ENCODE measurements at regions of chr6 and their contacts with region 1.

Region 1: DNA sequence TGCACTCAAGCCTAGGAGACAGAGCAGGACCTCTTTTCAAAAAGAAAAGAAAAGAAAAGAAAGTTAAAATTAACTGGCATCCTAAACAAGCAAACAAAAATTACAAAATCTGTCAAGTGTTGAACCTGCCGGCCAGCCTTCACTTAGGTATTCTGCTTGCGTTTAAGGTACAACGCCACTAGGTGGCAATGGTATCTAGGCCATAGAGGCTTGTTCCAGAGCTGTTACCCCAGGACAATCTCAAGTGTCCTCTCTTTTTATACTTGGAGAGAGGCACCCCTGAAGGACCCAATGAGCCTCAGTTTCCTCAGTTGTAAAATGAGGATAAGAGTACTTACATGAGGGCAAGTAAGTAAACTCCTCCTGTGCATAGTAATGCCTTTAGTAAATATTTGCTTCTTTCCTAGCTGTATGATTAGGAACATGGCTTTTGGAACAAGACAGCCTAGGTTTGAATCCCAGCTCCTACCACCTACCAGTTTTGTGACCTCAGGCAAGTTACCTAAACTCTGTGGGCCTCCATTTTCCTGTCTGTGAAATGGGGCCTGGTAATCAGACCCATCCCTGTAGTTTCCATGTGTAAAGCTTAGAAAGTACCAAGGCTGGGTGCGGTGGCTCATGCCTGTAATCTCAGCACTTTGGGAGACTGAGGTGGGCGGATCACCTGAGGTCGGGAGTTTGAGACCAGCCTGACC is 5.8 kb upstream of the PACSIN1 start:
- DNase-seq: no peak
- ATAC-seq: peak in 2 of 4 donors; percentile 48 to 52
- H3K4me3 ChIP-seq: no peak overlapping the region
- H3K27ac ChIP-seq: no peak overlapping the region
- H3K4me1 ChIP-seq: peaks cover 0 to 12% (median 0%) of the 10 kb centered on the region in 12 donors
- H3K27me3 ChIP-seq: peaks cover 0 to 15% (median 0%) of the 10 kb centered on the region in 9 donors
- CTCF ChIP-seq: peak; percentile 47 to 77 (median 60)
- POLR2A ChIP-seq: no peak

Region 2: GRCh38 chr6:34602318-34603111 is 142.5 kb after region 1 on chr6:
- intact Hi-C with region 1: loop called in 6 of 10 experiments (anchors 5 to 10 kb)
- DNase-seq: no peak
- ATAC-seq: peak in 2 of 4 donors; percentile 49
- H3K4me3 ChIP-seq: no peak overlapping the region
- H3K27ac ChIP-seq: peak overlapping the region in 4 of 12 donors; percentile 7 to 54 (median 22)
- H3K4me1 ChIP-seq: peaks cover 9 to 55% (median 32%) of the 10 kb centered on the region in 12 donors
- H3K27me3 ChIP-seq: no peaks in the 10 kb centered on the region
- CTCF ChIP-seq: no peak
- POLR2A ChIP-seq: no peak

Region 3: DNA sequence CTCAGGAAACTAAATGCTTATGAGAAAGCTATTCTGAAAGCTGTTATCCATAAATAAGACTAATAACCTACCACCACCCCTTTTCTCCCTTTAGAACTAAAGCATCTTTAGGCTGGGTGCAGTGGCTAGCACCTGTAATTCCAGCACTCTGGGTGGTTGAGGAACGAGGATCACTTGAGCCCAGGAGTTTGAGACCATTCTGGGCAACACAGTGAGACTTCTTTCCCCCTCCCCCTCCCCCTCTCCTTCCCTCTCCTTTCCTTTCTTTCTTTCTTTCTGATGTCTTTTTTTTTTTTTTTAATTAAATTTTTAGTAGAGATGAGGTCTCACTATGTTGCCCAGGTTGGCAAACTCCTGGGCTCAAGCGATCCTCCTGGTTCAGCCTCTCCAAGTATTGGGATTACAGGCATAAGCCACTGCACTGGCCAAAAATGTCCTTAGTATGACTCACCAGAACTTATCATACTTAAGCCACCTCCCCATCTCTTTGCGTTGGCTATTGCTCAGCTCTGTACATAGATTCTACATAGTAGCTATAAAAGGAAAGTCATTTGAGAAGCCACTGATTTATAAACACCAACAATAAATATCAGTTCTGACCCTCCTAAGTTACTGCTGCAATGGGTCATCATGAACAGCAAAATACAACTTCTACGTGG is 150.9 kb after region 1 on chr6:
- intact Hi-C with region 1: loop called (anchors 1 to 10 kb)
- DNase-seq: no peak
- ATAC-seq: peak in 2 of 4 donors; percentile 44 to 50
- H3K4me3 ChIP-seq: no peak overlapping the region
- H3K27ac ChIP-seq: peak overlapping the region in 2 of 12 donors; percentile 23 to 28
- H3K4me1 ChIP-seq: peaks cover 0 to 30% (median 18%) of the 10 kb centered on the region in 12 donors
- H3K27me3 ChIP-seq: no peaks in the 10 kb centered on the region
- CTCF ChIP-seq: no peak
- POLR2A ChIP-seq: no peak